Mammary epithelial cell (primary cell): ENCODE measurements at regions of chr17 and their contacts with region 1.

Region 1: GRCh38 chr17:41894791-41895331 is 23.9 kb downstream of the ACLY start:
- DNase-seq: no peak
- H3K4me3 ChIP-seq: no peak overlapping the region
- H3K27ac ChIP-seq: no peak overlapping the region
- H3K4me1 ChIP-seq: no peaks in the 10 kb centered on the region
- H3K27me3 ChIP-seq: no peaks in the 10 kb centered on the region
- CTCF ChIP-seq: no peak

Region 2: GRCh38 chr17:41835800-41836549 is 58.9 kb before region 1 on chr17 and contains the start of gene NT5C3B:
- CTCF ChIA-PET with region 1: no interaction called
- dilution Hi-C with region 1: loop called (anchors 5 kb)
- in situ Hi-C with region 1: no loop called
- intact Hi-C with region 1: no loop called
- DNase-seq: peak; percentile 9
- H3K4me3 ChIP-seq: peak within 1 kb of the TSS; percentile 51 to 94 (median 57)
- H3K27ac ChIP-seq: no peak within 1 kb of the TSS
- H3K4me1 ChIP-seq: peaks cover 6% of the 10 kb centered on the region
- H3K27me3 ChIP-seq: no peaks in the 10 kb centered on the region
- CTCF ChIP-seq: no peak
- total RNA-seq, gene NT5C3B: 40.5 to 55.2 TPM

Region 3: GRCh38 chr17:42153919-42154742 is 259.3 kb after region 1 on chr17:
- CTCF ChIA-PET with region 1: no interaction called
- dilution Hi-C with region 1: no loop called
- in situ Hi-C with region 1: no loop called
- intact Hi-C with region 1: no loop called
- DNase-seq: no peak
- H3K4me3 ChIP-seq: peak overlapping the region; percentile 57 to 80 (median 69)
- H3K27ac ChIP-seq: peak overlapping the region; percentile 37
- H3K4me1 ChIP-seq: peaks cover 10% of the 10 kb centered on the region
- H3K27me3 ChIP-seq: no peaks in the 10 kb centered on the region
- CTCF ChIP-seq: no peak